ENCODE measurements at regions of chr4 and their contacts with region 1.

Region 1: DNA sequence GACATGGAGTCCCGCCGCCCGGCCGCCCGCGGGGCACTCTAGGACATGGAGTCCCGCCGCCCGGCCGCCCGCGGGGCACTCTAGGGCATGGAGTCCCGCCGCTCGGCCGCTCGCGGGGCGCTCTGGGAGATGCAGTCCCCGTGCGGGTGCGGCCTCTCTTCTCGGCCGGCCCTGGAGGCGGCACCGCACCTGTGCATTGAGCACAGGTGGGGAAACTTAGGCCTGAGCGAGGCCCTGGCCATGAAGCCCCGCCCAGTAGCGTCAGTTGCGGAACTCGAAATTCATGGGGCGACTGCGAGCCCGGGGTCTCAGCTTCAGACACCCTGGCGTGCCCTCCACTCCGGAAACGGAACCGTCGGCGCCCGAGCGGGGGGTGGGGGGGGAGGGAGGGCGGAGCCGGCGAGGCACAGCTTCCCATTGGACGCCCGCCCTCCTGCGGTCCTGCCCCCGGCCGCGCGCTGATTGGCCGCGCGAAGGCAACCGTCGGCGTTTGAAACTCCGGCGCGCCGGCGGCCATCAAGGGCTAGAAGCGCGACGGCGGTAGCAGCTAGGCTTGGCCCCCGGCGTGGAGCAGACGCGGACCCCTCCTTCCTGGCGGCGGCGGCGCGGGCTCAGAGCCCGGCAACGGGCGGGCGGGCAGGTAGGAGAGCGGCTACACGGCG is at the starts of genes TACC3 and TMEM129:
- DNase-seq: peak; percentile 90 to 99 (median 95)
- ATAC-seq: peak; percentile 80
- H3K4me3 ChIP-seq: peak within 1 kb of the TSS; percentile 53
- H3K4me3 Mint-ChIP-seq: peak within 1 kb of the TSS; percentile 92
- H3K27ac ChIP-seq: peak within 1 kb of the TSS; percentile 85 to 88
- H3K27ac Mint-ChIP-seq: peak within 1 kb of the TSS; percentile 99
- H3K4me1 ChIP-seq: peaks cover 77% of the 10 kb centered on the region
- H3K4me1 Mint-ChIP-seq: peaks cover 56% of the 10 kb centered on the region
- H3K27me3 ChIP-seq: no peaks in the 10 kb centered on the region
- H3K27me3 Mint-ChIP-seq: no peaks in the 10 kb centered on the region
- CTCF ChIP-seq: no peak
- total RNA-seq, gene TACC3: 123 TPM
- total RNA-seq, gene TMEM129: 17.2 to 17.6 TPM

Region 2: GRCh38 chr4:1683736-1684505 is 37.2 kb before region 1 on chr4 and contains the start of gene FAM53A:
- CTCF ChIA-PET with region 1: interaction called, 3 read pairs
- POLR2A ChIA-PET with region 1: interaction called, 128 read pairs
- intact Hi-C with region 1: loop called in 1 of 2 experiments (anchors 5 kb)
- DNase-seq: peak in 11 of 14 experiments; percentile 7 to 96 (median 41)
- ATAC-seq: peak; percentile 91
- H3K4me3 ChIP-seq: peak within 1 kb of the TSS; percentile 58
- H3K4me3 Mint-ChIP-seq: peak within 1 kb of the TSS; percentile 93
- H3K27ac ChIP-seq: no peak within 1 kb of the TSS
- H3K27ac Mint-ChIP-seq: peak within 1 kb of the TSS; percentile 85
- H3K4me1 ChIP-seq: peaks cover 19% of the 10 kb centered on the region
- H3K4me1 Mint-ChIP-seq: peaks cover 13% of the 10 kb centered on the region
- H3K27me3 ChIP-seq: no peaks in the 10 kb centered on the region
- H3K27me3 Mint-ChIP-seq: no peaks in the 10 kb centered on the region
- CTCF ChIP-seq: no peak
- total RNA-seq, gene FAM53A: 0.93 to 2.4 TPM

Region 3: GRCh38 chr4:1693129-1693896 is 27.8 kb before region 1 on chr4:
- CTCF ChIA-PET with region 1: interaction called, 84 read pairs
- POLR2A ChIA-PET with region 1: interaction called, 128 read pairs
- intact Hi-C with region 1: loop called (anchors 1 kb)
- DNase-seq: peak; percentile 63 to 91 (median 75)
- ATAC-seq: peak; percentile 93
- H3K4me3 ChIP-seq: no peak overlapping the region
- H3K4me3 Mint-ChIP-seq: no peak overlapping the region
- H3K27ac ChIP-seq: peak overlapping the region in 1 of 2 donors; percentile 17
- H3K27ac Mint-ChIP-seq: peak overlapping the region; percentile 68
- H3K4me1 ChIP-seq: peaks cover 5% of the 10 kb centered on the region
- H3K4me1 Mint-ChIP-seq: peaks cover 5% of the 10 kb centered on the region
- H3K27me3 ChIP-seq: no peaks in the 10 kb centered on the region
- H3K27me3 Mint-ChIP-seq: no peaks in the 10 kb centered on the region
- CTCF ChIP-seq: peak; percentile 87

Measured in CD4-positive, alpha-beta T cell (primary cell).